Activated B cell treated with CpG ODN at 0.5 μM for 24 hours (primary cell): ENCODE measurements at regions of chr19 and their contacts with region 1.

Region 1: GRCh38 chr19:45178262-45179071 is at the start of gene BLOC1S3:
- DNase-seq: peak; percentile 97
- ATAC-seq: peak; percentile 87
- H3K4me3 Mint-ChIP-seq: peak within 1 kb of the TSS; percentile 94
- H3K27ac Mint-ChIP-seq: peak within 1 kb of the TSS; percentile 96
- H3K4me1 Mint-ChIP-seq: peaks cover 51% of the 10 kb centered on the region
- H3K27me3 Mint-ChIP-seq: no peaks in the 10 kb centered on the region
- CTCF ChIP-seq: no peak
- total RNA-seq, gene BLOC1S3: 15.6 and 16.5 TPM in 2 replicates

Region 2: GRCh38 chr19:44954824-44955586 is 223.5 kb before region 1 on chr19 and contains the start of gene CLPTM1:
- CTCF ChIA-PET with region 1: no interaction called
- POLR2A ChIA-PET with region 1: interaction called, 8 read pairs
- intact Hi-C with region 1: loop called (anchors 1 kb)
- DNase-seq: peak; percentile 85
- ATAC-seq: peak; percentile 89
- H3K4me3 Mint-ChIP-seq: peak within 1 kb of the TSS; percentile 97
- H3K27ac Mint-ChIP-seq: peak within 1 kb of the TSS; percentile 97
- H3K4me1 Mint-ChIP-seq: peaks cover 57% of the 10 kb centered on the region
- H3K27me3 Mint-ChIP-seq: no peaks in the 10 kb centered on the region
- CTCF ChIP-seq: no peak
- total RNA-seq, gene CLPTM1: 87.0 and 92.1 TPM in 2 replicates

Region 3: GRCh38 chr19:45016388-45017319 is 161.8 kb before region 1 on chr19:
- CTCF ChIA-PET with region 1: no interaction called
- POLR2A ChIA-PET with region 1: no interaction called
- intact Hi-C with region 1: loop called (anchors 2 kb)
- DNase-seq: peak; percentile 62
- ATAC-seq: peak; percentile 81
- H3K4me3 Mint-ChIP-seq: peak overlapping the region; percentile 64
- H3K27ac Mint-ChIP-seq: peak overlapping the region; percentile 89
- H3K4me1 Mint-ChIP-seq: peaks cover 22% of the 10 kb centered on the region
- H3K27me3 Mint-ChIP-seq: no peaks in the 10 kb centered on the region
- CTCF ChIP-seq: no peak

Region 4: GRCh38 chr19:45079063-45079910 is 99.2 kb before region 1 on chr19 and contains the start of gene GEMIN7:
- CTCF ChIA-PET with region 1: no interaction called
- POLR2A ChIA-PET with region 1: interaction called, 13 read pairs
- intact Hi-C with region 1: loop called (anchors 1 kb)
- DNase-seq: peak; percentile 85
- ATAC-seq: peak; percentile 33
- H3K4me3 Mint-ChIP-seq: peak within 1 kb of the TSS; percentile 97
- H3K27ac Mint-ChIP-seq: peak within 1 kb of the TSS; percentile 90
- H3K4me1 Mint-ChIP-seq: peaks cover 60% of the 10 kb centered on the region
- H3K27me3 Mint-ChIP-seq: no peaks in the 10 kb centered on the region
- CTCF ChIP-seq: no peak
- total RNA-seq, gene GEMIN7: 37.0 and 38.7 TPM in 2 replicates

Region 5: DNA sequence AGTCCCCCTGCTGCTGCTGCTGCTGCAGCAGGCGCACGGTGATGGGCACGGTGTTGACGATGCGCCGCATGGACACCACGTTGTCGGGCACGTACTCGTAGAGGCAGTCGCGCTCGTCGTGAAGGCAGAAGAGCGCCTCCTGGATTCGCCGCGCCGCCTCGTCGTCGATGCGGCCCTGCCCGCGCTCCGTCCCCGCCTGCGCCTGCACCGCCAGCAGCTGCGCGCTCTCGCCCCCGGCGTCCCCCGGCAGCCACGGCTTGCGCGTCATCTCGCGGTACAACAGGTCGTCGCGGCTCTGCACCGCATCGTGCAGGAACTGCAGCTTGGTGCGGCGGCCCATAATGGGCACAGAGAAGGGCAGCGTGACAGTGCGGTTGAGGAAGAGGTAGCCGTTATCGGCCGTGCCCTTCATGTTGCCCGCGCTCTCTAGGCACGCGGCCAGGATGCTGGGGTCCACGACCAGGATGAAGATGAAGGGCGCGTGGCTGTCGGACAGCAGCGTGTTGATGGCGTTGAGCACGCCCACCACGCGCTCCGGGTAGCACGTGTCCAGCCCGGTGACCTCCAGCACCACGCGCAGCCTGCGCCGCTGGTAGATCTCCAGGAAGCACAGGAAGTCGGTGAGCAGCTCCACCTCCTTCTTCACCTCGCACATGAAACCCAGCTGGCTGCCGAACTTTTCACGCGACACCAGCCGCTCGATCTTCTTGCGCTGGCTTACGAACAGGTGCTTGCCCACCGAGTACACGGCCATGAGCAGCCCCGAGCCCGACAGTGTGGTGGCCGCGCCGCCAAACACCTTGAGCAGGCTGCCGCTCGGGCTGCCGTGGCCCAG is 25.7 kb before region 1 on chr19:
- CTCF ChIA-PET with region 1: no interaction called
- POLR2A ChIA-PET with region 1: interaction called, 18 read pairs
- intact Hi-C with region 1: no loop called
- DNase-seq: peak; percentile 36
- ATAC-seq: peak; percentile 58
- H3K4me3 Mint-ChIP-seq: peak overlapping the region; percentile 79
- H3K27ac Mint-ChIP-seq: peak overlapping the region; percentile 12
- H3K4me1 Mint-ChIP-seq: peaks cover 15% of the 10 kb centered on the region
- H3K27me3 Mint-ChIP-seq: peaks cover 33% of the 10 kb centered on the region
- CTCF ChIP-seq: no peak

Region 6: DNA sequence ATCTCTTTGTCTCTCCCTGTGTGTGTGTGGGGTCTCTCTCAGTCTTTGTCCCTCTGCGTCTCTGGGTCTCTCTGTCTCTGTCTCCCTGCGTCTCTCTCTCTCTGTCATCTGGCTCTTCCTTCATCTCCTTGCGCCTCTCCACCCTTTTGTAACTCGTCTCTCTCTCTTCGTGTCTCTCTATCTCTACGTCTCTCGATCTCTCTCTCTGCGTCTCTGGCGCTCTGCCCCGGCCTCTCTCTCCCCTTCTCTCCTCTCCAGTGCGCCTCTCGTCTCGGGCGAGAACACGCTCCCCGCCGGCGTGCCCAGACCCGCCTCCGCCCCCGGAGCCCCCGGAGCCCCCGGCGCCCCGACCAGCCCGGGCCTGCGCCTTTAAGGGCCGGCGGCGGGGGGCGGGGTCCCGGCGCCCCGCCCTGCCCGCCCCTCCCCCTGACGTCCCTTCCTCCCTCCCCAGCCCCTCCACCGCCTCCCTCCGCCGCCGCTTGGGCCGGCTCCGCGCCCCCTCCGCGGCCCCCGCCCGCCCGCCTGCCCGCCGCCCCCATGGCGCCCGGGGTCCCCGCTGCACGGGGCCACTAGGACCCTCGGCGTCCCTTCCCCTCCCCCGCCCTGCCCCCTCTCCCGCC is 72.5 kb after region 1 on chr19 and contains the start of gene MARK4:
- CTCF ChIA-PET with region 1: no interaction called
- POLR2A ChIA-PET with region 1: no interaction called
- intact Hi-C with region 1: loop called (anchors 2 kb)
- DNase-seq: peak; percentile 56
- ATAC-seq: peak; percentile 79
- H3K4me3 Mint-ChIP-seq: peak within 1 kb of the TSS; percentile 86
- H3K27ac Mint-ChIP-seq: peak within 1 kb of the TSS; percentile 50
- H3K4me1 Mint-ChIP-seq: peaks cover 39% of the 10 kb centered on the region
- H3K27me3 Mint-ChIP-seq: no peaks in the 10 kb centered on the region
- CTCF ChIP-seq: no peak
- total RNA-seq, gene MARK4: 26.0 and 28.0 TPM in 2 replicates

Region 7: DNA sequence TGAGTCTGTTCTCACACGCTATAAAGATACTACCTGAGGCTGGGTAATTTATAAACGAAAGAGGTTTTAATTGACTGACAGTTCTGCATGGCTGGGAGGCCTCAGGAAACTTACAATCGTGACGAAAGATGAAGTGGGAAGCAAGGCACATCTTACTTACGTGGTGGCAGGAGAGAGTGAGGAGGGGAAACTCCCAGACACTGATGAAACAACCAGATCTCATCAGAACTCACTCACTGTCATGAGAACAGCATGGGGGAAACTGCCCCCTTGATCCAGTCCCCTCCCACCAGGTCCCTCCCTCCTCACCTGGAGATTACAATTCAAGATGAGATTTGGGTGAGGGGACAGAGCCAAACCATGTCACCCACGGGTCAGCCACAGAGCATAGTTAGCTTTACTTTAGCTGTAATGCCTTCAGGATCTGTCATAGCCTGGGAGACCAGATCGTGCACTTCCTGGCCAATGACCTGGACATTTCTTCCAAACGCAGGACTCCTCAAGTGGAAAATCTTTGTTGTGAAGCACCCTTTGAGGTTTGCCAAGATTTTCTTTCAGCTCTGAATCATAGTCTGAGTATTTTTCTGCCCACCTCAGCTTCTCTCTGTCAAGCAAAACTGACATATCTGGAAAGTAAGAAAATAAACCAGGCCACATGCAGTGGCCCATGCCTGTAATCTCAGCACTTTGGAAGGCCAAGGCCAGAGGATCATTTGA is 1093.2 kb after region 1 on chr19:
- CTCF ChIA-PET with region 1: no interaction called
- POLR2A ChIA-PET with region 1: no interaction called
- intact Hi-C with region 1: no loop called
- DNase-seq: no peak
- ATAC-seq: no peak
- H3K4me3 Mint-ChIP-seq: no peak overlapping the region
- H3K27ac Mint-ChIP-seq: no peak overlapping the region
- H3K4me1 Mint-ChIP-seq: peaks cover 2% of the 10 kb centered on the region
- H3K27me3 Mint-ChIP-seq: peaks cover 34% of the 10 kb centered on the region
- CTCF ChIP-seq: no peak